ENCODE measurements at regions of chr3 and their contacts with region 1.

Region 1: DNA sequence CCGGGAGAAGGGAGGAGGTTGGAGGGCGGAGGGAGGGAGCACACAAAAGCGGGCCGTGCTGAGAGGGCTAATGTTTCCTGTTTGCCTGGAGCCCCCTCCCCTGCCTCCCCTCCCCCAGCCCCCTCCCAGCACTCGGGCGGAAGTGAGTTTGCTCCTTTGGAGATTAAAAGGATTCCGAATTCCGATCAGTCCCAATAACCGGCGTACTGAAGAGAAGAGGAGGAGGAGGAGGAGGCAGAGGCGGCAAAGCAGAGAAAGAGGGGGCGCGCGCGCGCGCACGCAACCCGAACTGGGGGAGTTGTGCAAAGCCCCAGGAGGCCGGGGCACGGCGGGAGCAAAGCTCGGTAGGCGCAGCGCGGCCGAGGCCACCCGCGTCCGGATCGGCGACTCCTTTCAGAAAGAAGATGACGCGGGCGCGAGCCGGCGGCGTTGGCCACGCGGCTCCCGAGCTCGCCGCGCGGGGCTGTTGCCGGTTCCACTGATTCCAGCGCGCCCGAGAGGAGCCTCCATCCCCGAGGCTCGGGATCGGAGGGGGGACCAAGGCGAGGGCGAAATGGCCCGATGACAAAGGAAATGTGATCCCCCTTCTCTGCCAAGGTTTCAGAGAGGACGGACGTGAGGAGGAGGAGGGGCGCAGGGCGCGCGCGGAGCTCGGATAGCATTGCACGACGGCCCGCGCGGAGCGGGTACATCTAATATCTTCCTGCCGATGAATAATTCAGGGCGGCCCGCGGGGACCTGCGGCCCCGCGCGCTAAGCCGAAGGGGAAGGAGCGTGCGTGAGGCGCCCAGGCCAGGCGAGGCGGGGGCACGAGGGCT is 1.1 kb upstream of the TRIM71 start:
- DNase-seq: peak; percentile 82 to 94
- H3K4me3 ChIP-seq: peak overlapping the region; percentile 88 to 98 (median 94)
- H3K27ac ChIP-seq: peak overlapping the region; percentile 95
- H3K4me1 ChIP-seq: peaks cover 9 to 27% (median 11%) of the 10 kb centered on the region in 4 experiments; a peak in 6 of 7 replicates
- H3K27me3 ChIP-seq: no peaks in the 10 kb centered on the region
- CTCF ChIP-seq: no peak
- EP300 ChIP-seq: peak in 1 of 2 experiments; percentile 19; a peak in 1 of 3 replicates
- POLR2A ChIP-seq: peak in 1 of 2 experiments; percentile 33; a peak in 1 of 3 replicates
- RAD21 ChIP-seq: no peak; a peak in 1 of 4 replicates

Region 2: DNA sequence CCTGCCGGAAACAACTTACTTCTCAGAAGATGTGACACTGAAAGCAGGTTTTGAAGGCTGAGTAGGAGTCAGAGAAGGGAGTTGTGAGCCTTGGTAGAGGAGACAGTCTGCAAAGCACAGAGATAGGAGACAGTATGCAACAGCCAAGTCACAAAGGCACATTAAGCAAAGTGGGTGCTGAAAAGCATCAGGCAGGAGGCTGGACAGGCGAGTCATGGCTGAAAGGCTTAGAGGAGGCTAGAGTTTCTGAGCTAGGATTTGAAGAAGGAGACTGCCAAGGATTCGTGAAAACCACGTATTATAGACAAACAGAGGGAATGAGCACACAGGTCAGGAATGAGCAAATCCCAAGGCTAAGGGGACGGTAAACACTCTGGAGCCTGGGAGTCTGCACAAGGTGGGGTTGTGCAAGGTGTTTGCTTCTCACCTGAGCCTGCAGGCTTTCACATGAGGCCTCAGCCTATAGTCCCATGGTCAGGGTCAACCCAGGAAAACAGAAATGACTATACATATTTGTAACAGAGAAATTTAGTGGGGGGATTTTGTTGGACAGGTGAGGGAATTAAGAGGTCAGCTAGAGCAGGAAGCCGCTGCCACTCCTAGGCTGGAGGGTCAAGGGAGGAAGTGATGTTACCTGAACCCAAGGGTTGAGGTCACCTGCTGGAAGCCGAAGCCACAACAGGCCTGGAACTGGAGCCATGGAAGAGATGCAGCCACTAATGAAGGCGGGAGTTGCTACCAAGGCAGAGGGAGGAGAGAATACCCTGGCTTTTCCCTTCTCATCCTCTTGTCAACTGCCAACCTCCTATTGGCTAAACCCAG is 21.9 kb before region 1 on chr3:
- CTCF ChIA-PET with region 1: interaction called, 7 read pairs
- POLR2A ChIA-PET with region 1: interaction called, 13 read pairs
- DNase-seq: no peak
- H3K4me3 ChIP-seq: no peak overlapping the region
- H3K27ac ChIP-seq: 0 out of 2 replicates have a peak overlapping the region, but pooled peaks have one; percentile 6
- H3K4me1 ChIP-seq: peaks cover 0 to 3% (median under 1%) of the 10 kb centered on the region in 4 experiments; a peak in 3 of 7 replicates
- H3K27me3 ChIP-seq: no peaks in the 10 kb centered on the region
- CTCF ChIP-seq: no peak
- EP300 ChIP-seq: no peak
- POLR2A ChIP-seq: no peak
- RAD21 ChIP-seq: no peak

Region 3: GRCh38 chr3:32835961-32836360 is 19.3 kb after region 1 on chr3:
- CTCF ChIA-PET with region 1: interaction called, 8 read pairs
- POLR2A ChIA-PET with region 1: interaction called, 303 read pairs
- DNase-seq: peak in 1 of 2 experiments; percentile 73
- H3K4me3 ChIP-seq: peak overlapping the region; percentile 17 to 57 (median 37); a peak in 6 of 8 replicates
- H3K27ac ChIP-seq: no peak overlapping the region
- H3K4me1 ChIP-seq: peaks cover 26 to 55% (median 37%) of the 10 kb centered on the region in 4 experiments
- H3K27me3 ChIP-seq: no peaks in the 10 kb centered on the region
- CTCF ChIP-seq: no peak
- EP300 ChIP-seq: peak in 1 of 2 experiments; percentile 62; a peak in 1 of 3 replicates
- POLR2A ChIP-seq: peak in 1 of 2 experiments; percentile 67; a peak in 2 of 3 replicates
- RAD21 ChIP-seq: peak in 1 of 2 experiments; percentile 10; a peak in 1 of 4 replicates

Region 4: GRCh38 chr3:32842531-32842931 is 25.9 kb after region 1 on chr3:
- CTCF ChIA-PET with region 1: interaction called, 10 read pairs
- POLR2A ChIA-PET with region 1: interaction called, 303 read pairs
- DNase-seq: no peak
- H3K4me3 ChIP-seq: peak overlapping the region in 3 of 4 experiments; percentile 12 to 57 (median 35); a peak in 5 of 8 replicates
- H3K27ac ChIP-seq: peak overlapping the region; percentile 51; the same call in 1 of the 2 replicates
- H3K4me1 ChIP-seq: peaks cover 43 to 68% (median 61%) of the 10 kb centered on the region in 4 experiments
- H3K27me3 ChIP-seq: no peaks in the 10 kb centered on the region
- CTCF ChIP-seq: no peak
- EP300 ChIP-seq: no peak
- POLR2A ChIP-seq: peak in 1 of 2 experiments; percentile 60; a peak in 2 of 3 replicates
- RAD21 ChIP-seq: no peak

Region 5: GRCh38 chr3:32848215-32848614 is 31.6 kb after region 1 on chr3:
- CTCF ChIA-PET with region 1: interaction called, 10 read pairs
- POLR2A ChIA-PET with region 1: interaction called, 303 read pairs
- DNase-seq: no peak
- H3K4me3 ChIP-seq: peak overlapping the region in 1 of 4 experiments; percentile 37; a peak in 1 of 8 replicates
- H3K27ac ChIP-seq: no peak overlapping the region
- H3K4me1 ChIP-seq: peaks cover 40 to 63% (median 51%) of the 10 kb centered on the region in 4 experiments
- H3K27me3 ChIP-seq: no peaks in the 10 kb centered on the region
- CTCF ChIP-seq: no peak
- EP300 ChIP-seq: no peak
- POLR2A ChIP-seq: no peak; a peak in 2 of 3 replicates
- RAD21 ChIP-seq: no peak

Region 6: DNA sequence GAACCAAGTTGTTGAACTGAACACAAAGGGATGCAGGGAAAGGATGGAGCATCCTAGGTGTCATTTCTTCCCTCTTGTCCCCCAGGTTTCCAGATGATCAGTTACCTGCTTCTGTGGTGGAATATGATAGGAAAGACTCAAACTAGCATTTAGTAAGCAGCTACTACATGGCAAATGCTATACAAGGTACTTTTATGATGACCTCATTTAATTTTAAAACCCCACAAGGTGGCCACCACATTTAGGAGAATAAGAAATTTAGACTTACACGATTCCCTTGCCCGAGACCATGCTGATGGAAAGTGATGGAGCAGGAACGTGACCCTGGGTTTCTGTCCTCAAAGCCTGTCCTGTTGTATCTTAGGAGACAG is 175.7 kb after region 1 on chr3:
- CTCF ChIA-PET with region 1: no interaction called
- POLR2A ChIA-PET with region 1: no interaction called
- DNase-seq: no peak
- H3K4me3 ChIP-seq: no peak overlapping the region
- H3K27ac ChIP-seq: no peak overlapping the region
- H3K4me1 ChIP-seq: no peaks in the 10 kb centered on the region
- H3K27me3 ChIP-seq: no peaks in the 10 kb centered on the region
- CTCF ChIP-seq: no peak
- EP300 ChIP-seq: no peak
- POLR2A ChIP-seq: no peak
- RAD21 ChIP-seq: no peak